Vagina (tissue), 2 donors: ENCODE measurements at regions of chr1 and their contacts with region 1.

Region 1: GRCh38 chr1:223748773-223749733 is 36.7 kb downstream of the CAPN2 start:
- DNase-seq: no peak
- H3K4me3 ChIP-seq: peak overlapping the region; percentile 26 to 35
- H3K27ac ChIP-seq: peak overlapping the region; percentile 81
- H3K4me1 ChIP-seq: peaks cover 23% of the 10 kb centered on the region
- H3K27me3 ChIP-seq: no peaks in the 10 kb centered on the region
- CTCF ChIP-seq: peak; percentile 93 to 100 (median 94)
- POLR2A ChIP-seq: no peak

Region 2: DNA sequence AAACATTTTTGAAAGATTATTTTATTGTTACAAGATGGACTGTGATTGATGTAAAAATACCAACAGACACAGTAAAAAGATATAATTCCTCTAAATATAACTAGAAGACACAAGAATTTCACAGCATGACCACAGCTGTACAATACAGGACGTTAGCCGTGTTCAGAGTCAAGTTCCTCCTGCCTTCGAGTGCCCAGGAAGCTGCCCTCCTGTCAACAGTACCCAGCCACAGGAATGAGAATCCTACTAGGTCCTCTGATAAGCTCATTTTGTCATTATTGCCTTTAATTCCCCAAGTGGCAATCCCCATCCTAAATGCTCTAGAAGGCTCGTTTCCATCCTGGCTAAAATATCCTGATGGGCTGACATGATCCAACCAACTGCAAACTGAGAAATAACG is 53.1 kb before region 1 on chr1:
- intact Hi-C with region 1: loop called (anchors 10 kb)
- DNase-seq: no peak
- H3K4me3 ChIP-seq: no peak overlapping the region
- H3K27ac ChIP-seq: no peak overlapping the region
- H3K4me1 ChIP-seq: peaks cover 18% of the 10 kb centered on the region
- H3K27me3 ChIP-seq: no peaks in the 10 kb centered on the region
- CTCF ChIP-seq: no peak
- POLR2A ChIP-seq: no peak

Region 3: DNA sequence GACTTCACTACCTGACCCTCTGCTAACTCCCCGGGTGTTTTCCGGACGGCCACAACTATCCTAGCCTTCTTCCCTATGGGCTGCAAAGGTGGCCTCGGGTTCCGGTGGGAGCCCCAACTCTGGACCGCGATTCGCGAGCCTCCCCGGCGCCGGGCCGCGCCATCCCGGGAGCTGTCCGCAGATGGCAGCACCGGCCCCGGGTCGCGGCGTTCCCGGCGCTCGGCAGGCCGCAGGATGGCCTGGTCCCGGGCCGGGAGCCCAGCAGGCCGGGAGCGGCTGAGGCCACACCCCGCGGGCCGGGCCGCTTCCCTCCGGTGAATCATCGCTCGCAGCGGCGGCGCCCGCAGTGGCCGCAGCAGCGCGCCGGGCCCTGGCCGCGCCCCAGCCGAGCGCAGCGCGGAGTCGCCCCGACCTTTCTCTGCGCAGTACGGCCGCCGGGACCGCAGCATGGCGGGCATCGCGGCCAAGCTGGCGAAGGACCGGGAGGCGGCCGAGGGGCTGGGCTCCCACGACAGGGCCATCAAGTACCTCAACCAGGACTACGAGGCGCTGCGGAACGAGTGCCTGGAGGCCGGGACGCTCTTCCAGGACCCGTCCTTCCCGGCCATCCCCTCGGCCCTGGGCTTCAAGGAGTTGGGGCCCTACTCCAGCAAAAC is 36.7 kb before region 1 on chr1 and contains the start of gene CAPN2:
- intact Hi-C with region 1: loop called (anchors 2 kb)
- DNase-seq: no peak
- H3K4me3 ChIP-seq: peak within 1 kb of the TSS; percentile 68 to 75
- H3K27ac ChIP-seq: peak within 1 kb of the TSS; percentile 96
- H3K4me1 ChIP-seq: peaks cover 70% of the 10 kb centered on the region
- H3K27me3 ChIP-seq: no peaks in the 10 kb centered on the region
- CTCF ChIP-seq: peak; percentile 57 to 78 (median 58)
- POLR2A ChIP-seq: peak in 1 of 2 donors; percentile 89
- total RNA-seq, gene CAPN2: 208 TPM

Region 4: GRCh38 chr1:225737196-225737595 is 1988.1 kb after region 1 on chr1:
- intact Hi-C with region 1: no loop called
- DNase-seq: no peak
- H3K4me3 ChIP-seq: no peak overlapping the region
- H3K27ac ChIP-seq: peak overlapping the region; percentile 72
- H3K4me1 ChIP-seq: peaks cover 35% of the 10 kb centered on the region
- H3K27me3 ChIP-seq: no peaks in the 10 kb centered on the region
- CTCF ChIP-seq: no peak
- POLR2A ChIP-seq: no peak